ENCODE measurements at regions of chr9 and their contacts with region 1.

Region 1: GRCh38 chr9:89418882-89419640 is 78.9 kb downstream of the SEMA4D start:
- DNase-seq: no peak
- H3K4me3 ChIP-seq: no peak overlapping the region
- H3K27ac ChIP-seq: no peak overlapping the region
- H3K4me1 ChIP-seq: peaks cover 0 to 5% (median 0%) of the 10 kb centered on the region in 4 experiments; a peak in 1 of 7 replicates
- H3K27me3 ChIP-seq: no peaks in the 10 kb centered on the region; a peak in 1 of 7 replicates
- CTCF ChIP-seq: no peak
- EP300 ChIP-seq: no peak
- POLR2A ChIP-seq: no peak
- RAD21 ChIP-seq: no peak

Region 2: DNA sequence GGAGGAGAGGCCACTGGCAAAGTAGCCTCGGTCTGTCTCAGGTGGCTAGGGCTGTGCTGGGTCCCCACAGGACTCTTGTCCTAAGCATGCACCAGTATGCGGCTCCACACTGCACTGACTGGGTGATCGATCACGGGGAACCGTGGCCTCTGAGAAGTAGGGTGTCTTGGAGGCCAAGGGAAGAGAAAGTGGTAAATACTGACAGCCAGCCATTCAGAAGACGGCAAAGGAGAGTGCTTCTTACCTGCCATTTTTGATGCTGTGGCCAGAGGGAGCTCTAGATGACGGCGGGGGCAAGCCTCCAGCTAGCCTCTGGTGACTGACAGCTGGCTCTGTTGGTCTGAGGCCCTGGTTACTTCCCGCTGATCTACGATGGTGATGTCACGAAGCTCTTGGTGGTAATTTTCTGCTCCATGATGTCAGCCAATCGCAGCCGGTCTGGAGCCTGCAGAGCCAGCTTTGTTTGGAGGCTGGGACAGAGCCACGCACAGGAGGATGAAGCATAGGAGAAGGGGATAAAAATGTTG is 145.4 kb after region 1 on chr9:
- CTCF ChIA-PET with region 1: interaction called, 10 read pairs
- POLR2A ChIA-PET with region 1: no interaction called
- DNase-seq: peak; percentile 46 to 68
- H3K4me3 ChIP-seq: no peak overlapping the region
- H3K27ac ChIP-seq: no peak overlapping the region
- H3K4me1 ChIP-seq: peaks cover 0 to 3% (median 1%) of the 10 kb centered on the region in 4 experiments; a peak in 3 of 7 replicates
- H3K27me3 ChIP-seq: no peaks in the 10 kb centered on the region
- CTCF ChIP-seq: peak; percentile 54 to 82 (median 71)
- EP300 ChIP-seq: no peak
- POLR2A ChIP-seq: no peak
- RAD21 ChIP-seq: peak; percentile 38 to 53